ENCODE measurements at regions of chr21 and their contacts with region 1.

Region 1: GRCh38 chr21:33199516-33200217 is 30.1 kb upstream of the IFNAR2 start:
- DNase-seq: peak; percentile 86
- H3K4me3 ChIP-seq: no peak overlapping the region
- H3K27ac ChIP-seq: no peak overlapping the region
- H3K4me1 ChIP-seq: peaks cover 21% of the 10 kb centered on the region
- H3K27me3 ChIP-seq: no peaks in the 10 kb centered on the region
- CTCF ChIP-seq: peak; percentile 67 to 79

Region 2: DNA sequence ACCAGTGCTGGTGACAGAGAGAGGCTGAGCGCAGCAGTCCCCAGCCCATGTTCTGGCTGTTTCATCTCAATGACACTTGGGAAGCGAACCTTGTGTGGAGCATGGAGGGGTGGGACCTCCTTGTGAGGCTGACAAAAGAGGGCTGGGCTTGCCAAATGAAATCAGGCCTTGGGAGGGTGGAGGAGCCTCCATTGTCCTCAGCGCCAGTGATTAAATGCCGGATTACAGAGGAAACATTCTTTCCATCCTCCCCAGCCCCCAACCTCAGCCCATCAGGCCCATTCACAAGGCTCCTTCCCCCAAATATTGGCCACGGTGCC is 364.8 kb before region 1 on chr21:
- CTCF ChIA-PET with region 1: interaction called, 4 read pairs
- dilution Hi-C with region 1: loop called (anchors 10 kb)
- in situ Hi-C with region 1: loop called (anchors 10 kb)
- intact Hi-C with region 1: loop called (anchors 5 kb)
- DNase-seq: no peak
- H3K4me3 ChIP-seq: no peak overlapping the region
- H3K27ac ChIP-seq: no peak overlapping the region
- H3K4me1 ChIP-seq: no peaks in the 10 kb centered on the region
- H3K27me3 ChIP-seq: peaks cover 5% of the 10 kb centered on the region
- CTCF ChIP-seq: no peak

Region 3: DNA sequence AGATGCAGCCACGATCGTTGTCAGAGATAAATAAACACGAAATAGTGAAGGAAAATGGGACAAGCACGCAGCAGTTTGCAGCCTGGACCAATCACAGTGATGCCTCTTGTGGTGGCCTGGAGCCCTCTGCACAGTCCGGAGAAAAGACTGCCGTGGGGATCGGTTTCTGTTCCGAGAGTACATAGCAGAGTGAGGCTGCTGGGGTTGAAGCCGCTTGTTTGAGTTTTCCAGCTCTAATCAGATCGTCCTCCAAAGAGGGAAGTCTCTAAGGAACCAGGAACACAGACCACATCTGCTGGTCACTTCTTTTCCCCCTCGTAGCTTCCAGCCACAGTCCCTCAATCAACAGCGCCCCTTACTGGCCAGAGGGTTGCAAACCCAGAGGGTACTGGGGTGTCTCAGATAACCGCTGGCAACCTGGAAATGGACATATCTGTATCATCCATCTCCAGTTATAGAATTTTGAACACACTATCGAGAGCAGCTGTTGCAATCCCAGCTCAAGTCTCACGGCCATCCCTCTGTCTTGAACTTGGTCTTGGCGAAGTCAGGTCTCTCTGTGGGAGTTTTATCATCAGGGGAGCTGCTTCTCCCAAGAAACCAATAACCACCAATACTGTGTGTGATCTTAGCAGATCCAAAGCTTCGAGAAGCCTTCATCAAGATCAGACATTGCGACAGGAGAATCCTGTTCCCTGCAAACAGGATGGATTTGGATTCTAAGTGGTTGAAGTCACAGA is 72.3 kb before region 1 on chr21:
- CTCF ChIA-PET with region 1: no interaction called
- dilution Hi-C with region 1: no loop called
- in situ Hi-C with region 1: loop called in 1 of 2 experiments (anchors 5 kb)
- intact Hi-C with region 1: loop called (anchors 1 kb)
- DNase-seq: peak; percentile 44
- H3K4me3 ChIP-seq: no peak overlapping the region
- H3K27ac ChIP-seq: no peak overlapping the region
- H3K4me1 ChIP-seq: no peaks in the 10 kb centered on the region
- H3K27me3 ChIP-seq: no peaks in the 10 kb centered on the region
- CTCF ChIP-seq: peak; percentile 75 to 86

Region 4: GRCh38 chr21:33355355-33355754 is 155.7 kb after region 1 on chr21:
- CTCF ChIA-PET with region 1: no interaction called
- dilution Hi-C with region 1: no loop called
- in situ Hi-C with region 1: loop called in 1 of 2 experiments (anchors 5 kb)
- intact Hi-C with region 1: no loop called
- DNase-seq: no peak
- H3K4me3 ChIP-seq: no peak overlapping the region
- H3K27ac ChIP-seq: no peak overlapping the region
- H3K4me1 ChIP-seq: no peaks in the 10 kb centered on the region
- H3K27me3 ChIP-seq: no peaks in the 10 kb centered on the region
- CTCF ChIP-seq: no peak

Region 5: GRCh38 chr21:33441489-33442477 is 242.1 kb after region 1 on chr21:
- CTCF ChIA-PET with region 1: interaction called, 4 read pairs
- dilution Hi-C with region 1: loop called (anchors 5 kb)
- in situ Hi-C with region 1: loop called (anchors 5 to 10 kb)
- intact Hi-C with region 1: loop called (anchors 1 kb)
- DNase-seq: peak; percentile 96
- H3K4me3 ChIP-seq: no peak overlapping the region
- H3K27ac ChIP-seq: peak overlapping the region; percentile 70
- H3K4me1 ChIP-seq: peaks cover 19% of the 10 kb centered on the region
- H3K27me3 ChIP-seq: no peaks in the 10 kb centered on the region
- CTCF ChIP-seq: no peak

Measured in mammary epithelial cell (primary cell).